Posterior vena cava (tissue), 2 donors: ENCODE measurements at regions of chr14 and their contacts with region 1.

Region 1: GRCh38 chr14:95758331-95758730 is 44.4 kb upstream of the TCL1A start:
- DNase-seq: no peak

Region 2: GRCh38 chr14:95713596-95714371 is 44.5 kb before region 1 on chr14 and contains the start of gene TCL1A:
- intact Hi-C with region 1: loop called in 1 of 2 experiments (anchors 1 kb)
- DNase-seq: no peak
- total RNA-seq, gene TCL1A: 0.24 TPM in 1 of 2 donors, not detected in the other